ENCODE measurements at regions of chr5 and their contacts with region 1.

Region 1: DNA sequence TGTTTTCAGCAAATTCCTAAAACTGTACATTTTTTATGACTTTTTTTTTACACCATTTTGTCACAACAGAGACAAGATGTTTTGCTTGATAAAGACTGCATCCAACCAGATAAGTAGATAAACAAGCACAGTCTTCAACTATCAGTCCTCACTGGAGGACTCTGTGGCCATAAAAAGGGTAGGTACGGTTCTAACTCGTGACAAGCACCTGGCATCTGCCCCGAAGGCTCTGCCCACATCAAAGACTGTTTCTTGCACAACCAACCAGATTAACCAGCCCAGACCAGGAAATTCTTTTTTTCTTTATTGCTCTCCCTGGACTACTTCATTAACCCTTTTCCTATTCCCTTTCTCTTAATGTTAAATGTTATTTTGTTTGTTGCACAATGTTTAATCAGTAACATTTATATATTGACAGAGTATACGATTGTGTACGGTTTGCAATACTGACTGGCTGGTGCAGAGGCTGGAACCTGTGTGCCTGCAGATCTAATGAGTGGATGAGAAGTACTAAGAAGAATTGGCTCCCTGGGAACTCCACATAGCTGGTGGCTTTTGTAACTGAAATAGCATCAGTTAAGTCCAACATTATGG is 74.1 kb downstream of the SERINC5 start:
- DNase-seq: no peak
- ATAC-seq: peak; percentile 78
- H3K4me3 ChIP-seq: no peak overlapping the region
- H3K27ac ChIP-seq: no peak overlapping the region
- H3K4me1 ChIP-seq: peaks cover 8% of the 10 kb centered on the region
- H3K27me3 ChIP-seq: no peaks in the 10 kb centered on the region
- CTCF ChIP-seq: no peak
- EP300 ChIP-seq: no peak
- POLR2A ChIP-seq: no peak
- RAD21 ChIP-seq: no peak

Region 2: GRCh38 chr5:79785983-79786382 is 395.7 kb before region 1 on chr5:
- CTCF ChIA-PET with region 1: no interaction called
- POLR2A ChIA-PET with region 1: no interaction called
- RAD21 ChIA-PET with region 1: no interaction called
- SMC1A ChIA-PET with region 1: no interaction called
- in situ Hi-C with region 1: no loop called
- intact Hi-C with region 1: loop called (anchors 10 kb)
- DNase-seq: no peak
- ATAC-seq: no peak
- H3K4me3 ChIP-seq: no peak overlapping the region
- H3K27ac ChIP-seq: no peak overlapping the region
- H3K4me1 ChIP-seq: no peaks in the 10 kb centered on the region
- H3K27me3 ChIP-seq: no peaks in the 10 kb centered on the region
- CTCF ChIP-seq: no peak
- EP300 ChIP-seq: no peak
- POLR2A ChIP-seq: no peak
- RAD21 ChIP-seq: no peak

Region 3: GRCh38 chr5:80168388-80169028 is 13.2 kb before region 1 on chr5:
- CTCF ChIA-PET with region 1: interaction called, 3 read pairs
- POLR2A ChIA-PET with region 1: interaction called, 5 read pairs
- RAD21 ChIA-PET with region 1: no interaction called
- SMC1A ChIA-PET with region 1: interaction called, 15 read pairs
- in situ Hi-C with region 1: no loop called
- intact Hi-C with region 1: no loop called
- DNase-seq: no peak
- ATAC-seq: no peak
- H3K4me3 ChIP-seq: no peak overlapping the region
- H3K27ac ChIP-seq: no peak overlapping the region
- H3K4me1 ChIP-seq: peaks cover 6% of the 10 kb centered on the region; the same call in 1 of the 2 replicates
- H3K27me3 ChIP-seq: no peaks in the 10 kb centered on the region
- CTCF ChIP-seq: no peak
- EP300 ChIP-seq: no peak
- POLR2A ChIP-seq: no peak
- RAD21 ChIP-seq: no peak

Region 4: GRCh38 chr5:80324912-80325311 is 143.2 kb after region 1 on chr5:
- CTCF ChIA-PET with region 1: no interaction called
- POLR2A ChIA-PET with region 1: no interaction called
- RAD21 ChIA-PET with region 1: no interaction called
- SMC1A ChIA-PET with region 1: no interaction called
- in situ Hi-C with region 1: no loop called
- intact Hi-C with region 1: no loop called
- DNase-seq: no peak
- ATAC-seq: no peak
- H3K4me3 ChIP-seq: no peak overlapping the region
- H3K27ac ChIP-seq: no peak overlapping the region
- H3K4me1 ChIP-seq: no peaks in the 10 kb centered on the region
- H3K27me3 ChIP-seq: no peaks in the 10 kb centered on the region; a peak in 1 of 4 replicates
- CTCF ChIP-seq: no peak
- EP300 ChIP-seq: no peak
- POLR2A ChIP-seq: no peak
- RAD21 ChIP-seq: no peak